ENCODE measurements at regions of chr9 and their contacts with region 1.

Region 1: GRCh38 chr9:30982301-30982700 is 1402.1 kb upstream of the ACO1 start:
- DNase-seq: no peak
- H3K4me3 ChIP-seq: no peak overlapping the region
- H3K27ac ChIP-seq: no peak overlapping the region
- H3K27me3 ChIP-seq: no peaks in the 10 kb centered on the region
- CTCF ChIP-seq: no peak

Region 2: DNA sequence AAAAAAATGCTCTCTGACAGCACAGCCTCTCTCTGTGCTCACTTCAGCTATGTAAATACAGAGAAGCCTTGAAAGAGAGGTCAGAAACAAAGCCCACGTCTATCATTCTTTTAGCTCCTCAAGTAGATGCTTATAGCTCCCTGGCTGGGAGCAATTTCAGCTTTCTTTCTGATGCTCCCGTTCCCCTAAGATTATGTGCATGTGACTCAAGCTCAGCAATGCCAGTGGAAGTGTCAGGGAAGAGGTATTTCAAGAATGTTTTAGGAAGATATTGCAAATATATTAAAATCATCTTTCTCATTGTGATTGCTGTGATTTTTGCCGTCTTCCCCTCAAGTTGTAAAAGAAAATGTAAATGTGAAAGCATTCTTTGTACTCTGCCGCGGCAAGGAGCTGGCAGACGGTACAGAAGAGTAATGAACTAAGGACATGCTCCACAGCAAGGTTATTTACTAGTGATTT is 48.5 kb after region 1 on chr9:
- intact Hi-C with region 1: loop called in 1 of 2 experiments (anchors 10 kb)
- DNase-seq: no peak
- H3K4me3 ChIP-seq: peak overlapping the region in 29 of 59 donors; percentile 1 to 50 (median 30)
- H3K27ac ChIP-seq: no peak overlapping the region
- H3K27me3 ChIP-seq: no peaks in the 10 kb centered on the region
- CTCF ChIP-seq: no peak

Region 3: DNA sequence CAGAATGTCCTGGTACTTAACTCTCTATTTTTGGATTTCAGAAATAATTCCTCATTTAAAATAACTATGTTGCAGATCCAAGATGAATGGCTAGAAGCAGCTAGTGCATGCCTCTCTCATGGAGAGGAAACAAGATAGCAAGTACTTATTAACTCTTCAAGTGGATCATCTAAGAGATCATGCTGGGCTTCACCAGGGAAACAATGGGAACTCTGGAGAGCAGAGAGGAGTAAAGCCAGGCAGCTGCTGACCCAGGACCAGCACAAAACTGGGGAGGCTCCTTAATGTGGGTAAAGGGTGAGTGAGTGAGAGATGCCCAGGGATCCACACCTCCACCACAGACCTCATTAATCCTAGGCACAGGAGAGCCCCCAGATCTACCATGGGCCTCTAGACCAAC is 504.3 kb after region 1 on chr9:
- intact Hi-C with region 1: no loop called
- DNase-seq: no peak
- H3K4me3 ChIP-seq: no peak overlapping the region
- H3K27ac ChIP-seq: no peak overlapping the region
- H3K27me3 ChIP-seq: no peaks in the 10 kb centered on the region
- CTCF ChIP-seq: no peak